Uterus (tissue), 4 donors: ENCODE measurements at regions of chr1 and their contacts with region 1.

Region 1: GRCh38 chr1:35564037-35564883 is 6.7 kb downstream of the NCDN start:
- DNase-seq: peak; percentile 70 to 77
- H3K4me3 ChIP-seq: no peak overlapping the region
- H3K27ac ChIP-seq: no peak overlapping the region
- H3K4me1 ChIP-seq: peaks cover 0 to 9% of the 10 kb centered on the region in 2 donors
- H3K27me3 ChIP-seq: no peaks in the 10 kb centered on the region
- CTCF ChIP-seq: peak; percentile 58 to 68 (median 64)
- POLR2A ChIP-seq: no peak

Region 2: DNA sequence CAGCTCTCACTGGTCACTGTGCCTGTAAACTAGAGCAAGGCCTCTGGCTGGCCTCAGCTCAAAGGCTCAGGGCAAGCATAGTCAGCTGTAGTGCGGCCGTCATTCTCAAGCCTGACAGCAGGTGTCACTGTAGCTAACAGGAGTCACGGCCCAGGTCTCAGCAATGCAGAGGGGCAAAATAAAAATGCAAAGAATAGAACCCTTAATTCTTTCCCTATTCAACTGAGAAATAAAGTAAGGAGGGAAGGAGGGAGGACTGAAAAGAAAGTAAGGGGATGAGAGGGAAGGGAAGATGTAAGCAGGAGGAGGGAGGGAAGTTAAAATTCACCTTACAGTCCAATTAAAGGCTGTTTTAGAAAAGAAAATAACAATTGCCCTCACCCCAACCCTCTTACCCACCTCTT is 113.1 kb before region 1 on chr1:
- intact Hi-C with region 1: loop called (anchors 5 kb)
- DNase-seq: peak; percentile 73 to 76
- H3K4me3 ChIP-seq: no peak overlapping the region
- H3K27ac ChIP-seq: peak overlapping the region in 1 of 2 donors; percentile 46
- H3K4me1 ChIP-seq: peaks cover 4 to 11% of the 10 kb centered on the region in 2 donors
- H3K27me3 ChIP-seq: no peaks in the 10 kb centered on the region
- CTCF ChIP-seq: peak; percentile 76 to 84 (median 80)
- POLR2A ChIP-seq: no peak

Region 3: DNA sequence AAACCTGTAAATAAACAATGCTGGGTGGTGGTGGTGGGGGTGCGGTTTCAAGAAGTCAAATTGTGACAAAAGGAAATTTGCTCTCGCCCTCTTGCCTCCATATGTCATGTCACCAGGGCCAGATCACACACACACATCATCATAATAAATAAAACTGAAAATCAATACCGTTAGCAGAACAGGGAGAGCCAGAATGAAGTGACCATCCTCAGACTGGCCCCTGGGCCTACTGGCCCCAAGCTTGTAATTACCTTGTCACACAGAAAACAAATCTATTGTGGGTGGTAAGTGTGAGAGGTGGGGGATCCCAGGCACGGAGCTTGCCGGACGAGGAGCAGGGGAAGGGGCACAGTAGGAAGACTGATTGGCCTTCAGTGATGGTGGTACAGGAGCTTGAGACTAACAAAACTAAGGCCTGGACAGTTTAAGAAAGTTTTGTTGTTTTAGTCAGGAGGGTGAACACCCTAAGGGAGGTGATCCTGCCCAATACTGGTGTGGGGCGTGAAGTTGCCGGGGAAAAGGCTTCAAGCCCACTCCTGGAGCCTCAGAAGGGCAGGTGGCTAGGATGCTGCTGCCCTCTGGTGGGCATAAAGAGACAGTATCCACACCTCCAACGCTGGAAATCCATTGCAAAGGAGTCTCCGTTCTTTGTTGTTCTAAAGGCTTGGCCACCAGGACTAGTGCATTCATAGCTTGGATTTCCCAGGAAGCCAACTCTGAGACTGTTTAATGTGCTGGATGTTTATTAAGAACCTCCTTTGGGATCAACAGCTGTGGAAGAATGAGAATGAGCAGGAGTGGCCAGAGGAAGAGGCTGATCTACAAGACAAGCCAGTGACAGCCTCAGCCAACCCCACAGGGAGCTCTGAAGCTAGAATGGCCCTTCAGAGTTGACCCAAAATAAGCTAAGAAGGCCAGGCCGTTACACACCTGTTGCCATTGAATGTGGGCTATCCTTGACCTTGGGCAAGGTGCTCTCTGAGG is 162.5 kb after region 1 on chr1:
- intact Hi-C with region 1: loop called (anchors 5 kb)
- DNase-seq: peak; percentile 42 to 52
- H3K4me3 ChIP-seq: no peak overlapping the region
- H3K27ac ChIP-seq: no peak overlapping the region
- H3K4me1 ChIP-seq: no peaks in the 10 kb centered on the region
- H3K27me3 ChIP-seq: no peaks in the 10 kb centered on the region
- CTCF ChIP-seq: peak; percentile 75 to 81 (median 76)
- POLR2A ChIP-seq: no peak

Region 4: GRCh38 chr1:35747938-35748702 is 183.9 kb after region 1 on chr1:
- intact Hi-C with region 1: no loop called
- DNase-seq: no peak
- H3K4me3 ChIP-seq: no peak overlapping the region
- H3K27ac ChIP-seq: no peak overlapping the region
- H3K4me1 ChIP-seq: no peaks in the 10 kb centered on the region
- H3K27me3 ChIP-seq: no peaks in the 10 kb centered on the region
- CTCF ChIP-seq: no peak
- POLR2A ChIP-seq: no peak